CD4-positive, alpha-beta T cell (primary cell): ENCODE measurements at regions of chr7 and their contacts with region 1.

Region 1: GRCh38 chr7:5831196-5831595 is 49.4 kb upstream of the OCM start:
- DNase-seq: no peak
- ATAC-seq: no peak
- H3K4me3 ChIP-seq: no peak overlapping the region
- H3K4me3 Mint-ChIP-seq: no peak overlapping the region
- H3K27ac ChIP-seq: no peak overlapping the region
- H3K27ac Mint-ChIP-seq: peak overlapping the region; percentile 74
- H3K4me1 ChIP-seq: peaks cover 53% of the 10 kb centered on the region
- H3K4me1 Mint-ChIP-seq: peaks cover 55% of the 10 kb centered on the region
- H3K27me3 ChIP-seq: no peaks in the 10 kb centered on the region
- H3K27me3 Mint-ChIP-seq: no peaks in the 10 kb centered on the region
- CTCF ChIP-seq: no peak

Region 2: DNA sequence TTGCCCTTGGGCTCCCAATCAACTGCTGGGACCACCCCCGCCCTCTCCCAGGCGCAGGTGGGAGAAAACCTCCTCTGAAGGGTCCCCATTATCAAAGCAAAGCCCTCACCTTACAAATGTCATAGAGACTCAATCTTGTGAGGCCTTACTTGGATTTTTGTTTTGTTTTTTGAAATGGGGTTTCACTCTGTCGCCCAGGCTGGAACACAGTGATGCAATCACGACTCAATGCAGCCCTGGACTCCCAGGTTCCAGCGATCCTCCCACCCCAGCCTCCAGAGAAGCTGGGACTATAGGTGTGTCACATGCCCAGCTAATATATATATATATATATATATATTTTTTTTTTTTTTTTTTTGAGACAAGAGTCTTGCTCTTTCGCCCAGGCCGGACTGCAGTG is 698.7 kb before region 1 on chr7:
- CTCF ChIA-PET with region 1: no interaction called
- POLR2A ChIA-PET with region 1: no interaction called
- intact Hi-C with region 1: loop called in 1 of 2 experiments (anchors 5 kb)
- DNase-seq: no peak
- ATAC-seq: no peak
- H3K4me3 ChIP-seq: no peak overlapping the region
- H3K4me3 Mint-ChIP-seq: no peak overlapping the region
- H3K27ac ChIP-seq: no peak overlapping the region
- H3K27ac Mint-ChIP-seq: peak overlapping the region; percentile 91
- H3K4me1 ChIP-seq: peaks cover 48% of the 10 kb centered on the region
- H3K4me1 Mint-ChIP-seq: peaks cover 29% of the 10 kb centered on the region
- H3K27me3 ChIP-seq: no peaks in the 10 kb centered on the region
- H3K27me3 Mint-ChIP-seq: no peaks in the 10 kb centered on the region
- CTCF ChIP-seq: no peak

Region 3: GRCh38 chr7:5477723-5478531 is 353.3 kb before region 1 on chr7:
- CTCF ChIA-PET with region 1: no interaction called
- POLR2A ChIA-PET with region 1: no interaction called
- intact Hi-C with region 1: no loop called
- DNase-seq: no peak
- ATAC-seq: no peak
- H3K4me3 ChIP-seq: peak overlapping the region; percentile 12
- H3K4me3 Mint-ChIP-seq: peak overlapping the region; percentile 15
- H3K27ac ChIP-seq: no peak overlapping the region
- H3K27ac Mint-ChIP-seq: no peak overlapping the region
- H3K4me1 ChIP-seq: no peaks in the 10 kb centered on the region
- H3K4me1 Mint-ChIP-seq: no peaks in the 10 kb centered on the region
- H3K27me3 ChIP-seq: no peaks in the 10 kb centered on the region
- H3K27me3 Mint-ChIP-seq: no peaks in the 10 kb centered on the region
- CTCF ChIP-seq: no peak

Region 4: GRCh38 chr7:5507013-5507412 is 324.2 kb before region 1 on chr7:
- CTCF ChIA-PET with region 1: no interaction called
- POLR2A ChIA-PET with region 1: no interaction called
- intact Hi-C with region 1: no loop called
- DNase-seq: no peak
- ATAC-seq: no peak
- H3K4me3 ChIP-seq: no peak overlapping the region
- H3K4me3 Mint-ChIP-seq: no peak overlapping the region
- H3K27ac ChIP-seq: no peak overlapping the region
- H3K27ac Mint-ChIP-seq: no peak overlapping the region
- H3K4me1 ChIP-seq: no peaks in the 10 kb centered on the region
- H3K4me1 Mint-ChIP-seq: no peaks in the 10 kb centered on the region
- H3K27me3 ChIP-seq: no peaks in the 10 kb centered on the region
- H3K27me3 Mint-ChIP-seq: no peaks in the 10 kb centered on the region
- CTCF ChIP-seq: no peak

Region 5: GRCh38 chr7:5665094-5666025 is 165.8 kb before region 1 on chr7:
- CTCF ChIA-PET with region 1: no interaction called
- POLR2A ChIA-PET with region 1: no interaction called
- intact Hi-C with region 1: no loop called
- DNase-seq: peak; percentile 38 to 86 (median 50)
- ATAC-seq: peak; percentile 80
- H3K4me3 ChIP-seq: no peak overlapping the region
- H3K4me3 Mint-ChIP-seq: no peak overlapping the region
- H3K27ac ChIP-seq: no peak overlapping the region
- H3K27ac Mint-ChIP-seq: no peak overlapping the region
- H3K4me1 ChIP-seq: peaks cover 15% of the 10 kb centered on the region
- H3K4me1 Mint-ChIP-seq: peaks cover 21% of the 10 kb centered on the region
- H3K27me3 ChIP-seq: no peaks in the 10 kb centered on the region
- H3K27me3 Mint-ChIP-seq: no peaks in the 10 kb centered on the region
- CTCF ChIP-seq: peak; percentile 82

Region 6: GRCh38 chr7:7183838-7184463 is 1352.8 kb after region 1 on chr7:
- CTCF ChIA-PET with region 1: no interaction called
- POLR2A ChIA-PET with region 1: no interaction called
- intact Hi-C with region 1: no loop called
- DNase-seq: no peak
- ATAC-seq: no peak
- H3K4me3 ChIP-seq: peak overlapping the region; percentile 95
- H3K4me3 Mint-ChIP-seq: peak overlapping the region; percentile 94
- H3K27ac ChIP-seq: no peak overlapping the region
- H3K27ac Mint-ChIP-seq: no peak overlapping the region
- H3K4me1 ChIP-seq: peaks cover 30% of the 10 kb centered on the region
- H3K4me1 Mint-ChIP-seq: peaks cover 6% of the 10 kb centered on the region
- H3K27me3 ChIP-seq: no peaks in the 10 kb centered on the region
- H3K27me3 Mint-ChIP-seq: no peaks in the 10 kb centered on the region
- CTCF ChIP-seq: no peak